WTC11 (cell line): ENCODE measurements at regions of chr5 and their contacts with region 1.

Region 1: GRCh38 chr5:176744584-176744965 is 65.8 kb upstream of the UNC5A start:
- DNase-seq: no peak
- ATAC-seq: no peak; the same call in 1 of the 2 replicates
- H3K4me3 Mint-ChIP-seq: peak overlapping the region; percentile 70
- H3K27ac Mint-ChIP-seq: no peak overlapping the region
- H3K4me1 Mint-ChIP-seq: peaks cover 64% of the 10 kb centered on the region
- H3K27me3 Mint-ChIP-seq: peaks cover 37% of the 10 kb centered on the region
- CTCF ChIP-seq: no peak

Region 2: DNA sequence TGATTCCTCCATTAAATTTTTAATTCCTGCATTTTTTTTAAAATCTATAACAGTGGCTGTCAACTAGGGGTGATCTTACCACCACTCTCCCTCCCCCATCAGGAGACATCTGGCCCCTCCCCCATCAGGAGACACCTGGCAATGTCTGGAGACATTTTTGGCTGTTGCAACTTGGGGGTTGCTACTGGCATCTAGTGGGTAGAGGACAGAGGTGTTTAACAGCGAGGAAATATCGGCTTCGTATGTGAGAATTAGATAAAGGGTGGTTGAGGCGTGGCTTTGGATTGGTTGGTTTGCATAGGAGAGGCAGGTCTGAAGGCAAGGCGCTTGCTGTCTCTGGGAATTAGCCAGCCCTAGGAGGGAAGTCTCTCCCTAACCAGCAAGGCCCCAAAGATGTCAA is 184.9 kb before region 1 on chr5:
- CTCF ChIA-PET with region 1: no interaction called
- POLR2A ChIA-PET with region 1: no interaction called
- DNase-seq: no peak
- ATAC-seq: peak; percentile 66
- H3K4me3 Mint-ChIP-seq: no peak overlapping the region
- H3K27ac Mint-ChIP-seq: no peak overlapping the region
- H3K4me1 Mint-ChIP-seq: peaks cover 9% of the 10 kb centered on the region
- H3K27me3 Mint-ChIP-seq: no peaks in the 10 kb centered on the region
- CTCF ChIP-seq: no peak

Region 3: GRCh38 chr5:176670449-176670848 is 74.1 kb before region 1 on chr5:
- CTCF ChIA-PET with region 1: interaction called, 11 read pairs
- POLR2A ChIA-PET with region 1: no interaction called
- DNase-seq: no peak
- ATAC-seq: no peak
- H3K4me3 Mint-ChIP-seq: no peak overlapping the region
- H3K27ac Mint-ChIP-seq: no peak overlapping the region
- H3K4me1 Mint-ChIP-seq: peaks cover 27% of the 10 kb centered on the region
- H3K27me3 Mint-ChIP-seq: peaks cover 7% of the 10 kb centered on the region; the same call in 1 of the 2 replicates
- CTCF ChIP-seq: no peak

Region 4: GRCh38 chr5:176733406-176734262 is 10.9 kb before region 1 on chr5:
- CTCF ChIA-PET with region 1: interaction called, 13 read pairs
- POLR2A ChIA-PET with region 1: interaction called, 3 read pairs
- DNase-seq: peak; percentile 10
- ATAC-seq: no peak
- H3K4me3 Mint-ChIP-seq: no peak overlapping the region
- H3K27ac Mint-ChIP-seq: no peak overlapping the region
- H3K4me1 Mint-ChIP-seq: peaks cover 23% of the 10 kb centered on the region
- H3K27me3 Mint-ChIP-seq: peaks cover 11% of the 10 kb centered on the region
- CTCF ChIP-seq: no peak

Region 5: GRCh38 chr5:176793337-176794138 is 49.0 kb after region 1 on chr5:
- CTCF ChIA-PET with region 1: interaction called, 10 read pairs
- POLR2A ChIA-PET with region 1: no interaction called
- DNase-seq: peak; percentile 50
- ATAC-seq: peak; percentile 93
- H3K4me3 Mint-ChIP-seq: no peak overlapping the region
- H3K27ac Mint-ChIP-seq: no peak overlapping the region
- H3K4me1 Mint-ChIP-seq: peaks cover 26% of the 10 kb centered on the region
- H3K27me3 Mint-ChIP-seq: no peaks in the 10 kb centered on the region; the same call in 1 of the 2 replicates
- CTCF ChIP-seq: no peak

Region 6: DNA sequence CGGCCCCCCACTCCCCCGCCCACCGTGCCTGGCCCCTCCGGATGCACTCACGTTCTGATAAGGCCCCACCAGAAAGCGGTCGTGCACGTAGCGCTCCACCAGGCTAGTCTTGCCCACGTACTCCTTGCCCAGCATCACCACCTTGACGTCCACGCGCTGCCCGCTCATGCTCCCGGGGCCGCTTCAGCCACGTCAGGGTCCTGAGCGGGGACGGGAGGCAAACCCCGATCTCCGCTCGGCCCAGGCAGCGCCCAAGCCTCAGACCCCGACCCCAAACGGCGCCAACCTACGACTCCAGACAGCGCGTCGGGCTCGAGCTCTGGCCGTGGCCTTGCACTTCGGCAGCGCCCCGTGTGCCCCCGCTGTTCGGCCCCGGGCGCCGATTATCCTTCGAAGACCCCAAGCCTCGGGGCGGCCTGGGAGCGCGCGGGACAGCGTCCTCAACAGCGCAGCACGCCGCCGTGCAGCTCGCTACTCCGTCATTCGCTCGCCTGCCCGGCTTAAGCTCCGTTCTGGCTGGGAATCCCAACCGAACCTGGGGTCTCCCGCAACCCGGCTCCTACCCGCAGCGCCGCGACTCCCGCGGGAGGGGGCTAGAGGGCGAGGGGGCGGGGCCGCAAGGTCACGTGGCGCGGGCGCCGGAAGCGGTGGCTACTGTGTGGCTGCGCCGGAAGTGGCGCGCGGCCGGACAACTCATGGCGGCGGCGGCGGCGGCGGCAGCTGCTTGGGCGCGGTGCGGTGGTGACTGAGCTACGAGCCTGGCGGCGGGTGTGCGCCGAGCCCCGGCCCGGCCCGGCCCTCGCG is 558.7 kb after region 1 on chr5 and contains the starts of genes PRELID1 and RAB24:
- CTCF ChIA-PET with region 1: no interaction called
- POLR2A ChIA-PET with region 1: no interaction called
- DNase-seq: peak; percentile 91
- ATAC-seq: peak; percentile 31
- H3K4me3 Mint-ChIP-seq: peak within 1 kb of the TSS; percentile 93
- H3K27ac Mint-ChIP-seq: peak within 1 kb of the TSS; percentile 82
- H3K4me1 Mint-ChIP-seq: peaks cover 36% of the 10 kb centered on the region
- H3K27me3 Mint-ChIP-seq: no peaks in the 10 kb centered on the region
- CTCF ChIP-seq: no peak
- total RNA-seq, gene PRELID1: 235 to 273 TPM (median 245 TPM) in 3 replicates
- total RNA-seq, gene RAB24: 37.0 to 40.2 TPM (median 38.0 TPM) in 3 replicates